Activated CD4-positive, alpha-beta memory T cell treated with anti-CD3 and anti-CD28 coated beads, Interleukin-2, amount 10 ng/mL, durations not matched to agents 7 days and 5 days (primary cell): ENCODE measurements at regions of chr1 and their contacts with region 1.

Region 1: GRCh38 chr1:36223993-36224536 is at the start of gene THRAP3:
- DNase-seq: peak; percentile 100
- H3K4me3 Mint-ChIP-seq: peak within 1 kb of the TSS; percentile 94
- H3K27ac Mint-ChIP-seq: peak within 1 kb of the TSS; percentile 99
- H3K4me1 Mint-ChIP-seq: peaks cover 32% of the 10 kb centered on the region
- H3K27me3 Mint-ChIP-seq: no peaks in the 10 kb centered on the region
- total RNA-seq, gene THRAP3: 128 to 133 TPM

Region 2: GRCh38 chr1:36160949-36161485 is 63.0 kb before region 1 on chr1:
- CTCF ChIA-PET with region 1: interaction called, 10 read pairs
- POLR2A ChIA-PET with region 1: interaction called, 72 read pairs
- DNase-seq: peak; percentile 84
- H3K4me3 Mint-ChIP-seq: peak overlapping the region; percentile 74
- H3K27ac Mint-ChIP-seq: peak overlapping the region; percentile 88
- H3K4me1 Mint-ChIP-seq: peaks cover 67% of the 10 kb centered on the region
- H3K27me3 Mint-ChIP-seq: no peaks in the 10 kb centered on the region

Region 3: DNA sequence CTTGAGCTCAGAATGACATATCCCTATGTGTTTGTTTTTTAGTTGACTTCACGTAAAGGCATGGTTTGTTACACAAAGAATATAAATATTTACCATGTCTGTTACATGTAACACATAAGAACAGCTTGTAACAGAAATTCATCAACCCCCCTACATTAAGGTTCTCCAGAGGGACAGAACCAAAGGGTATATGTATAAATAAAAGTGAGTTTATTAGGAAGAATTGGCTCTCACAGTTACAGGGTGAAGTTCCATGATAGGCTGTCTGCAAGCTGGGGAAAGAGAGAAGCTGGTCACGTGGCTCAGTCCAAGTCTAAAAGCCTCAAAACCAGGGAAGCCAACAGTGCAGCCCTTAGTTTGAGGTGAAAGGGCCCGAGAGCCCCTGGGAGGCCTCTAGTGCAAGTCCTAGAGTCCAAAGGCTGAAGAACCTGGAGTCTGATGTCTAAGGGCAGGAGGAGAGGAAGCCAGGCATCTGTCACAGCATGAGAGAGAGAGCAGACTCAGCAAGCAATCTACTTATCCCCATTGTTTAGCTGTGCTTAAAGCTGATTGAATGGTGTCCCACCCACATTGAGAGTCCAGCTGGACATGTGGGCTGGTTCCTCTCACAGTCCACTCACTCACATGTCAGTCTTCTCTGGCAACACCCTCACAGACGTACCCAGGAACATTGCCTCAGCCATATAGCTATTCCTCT is 16.0 kb after region 1 on chr1:
- CTCF ChIA-PET with region 1: interaction called, 4 read pairs
- POLR2A ChIA-PET with region 1: interaction called, 26 read pairs
- DNase-seq: no peak
- H3K4me3 Mint-ChIP-seq: no peak overlapping the region
- H3K27ac Mint-ChIP-seq: no peak overlapping the region
- H3K4me1 Mint-ChIP-seq: peaks cover 20% of the 10 kb centered on the region
- H3K27me3 Mint-ChIP-seq: no peaks in the 10 kb centered on the region

Region 4: GRCh38 chr1:36285448-36286101 is 61.5 kb after region 1 on chr1:
- CTCF ChIA-PET with region 1: interaction called, 9 read pairs
- POLR2A ChIA-PET with region 1: interaction called, 11 read pairs
- DNase-seq: peak; percentile 65
- H3K4me3 Mint-ChIP-seq: no peak overlapping the region
- H3K27ac Mint-ChIP-seq: peak overlapping the region; percentile 61
- H3K4me1 Mint-ChIP-seq: peaks cover 21% of the 10 kb centered on the region
- H3K27me3 Mint-ChIP-seq: no peaks in the 10 kb centered on the region

Region 5: DNA sequence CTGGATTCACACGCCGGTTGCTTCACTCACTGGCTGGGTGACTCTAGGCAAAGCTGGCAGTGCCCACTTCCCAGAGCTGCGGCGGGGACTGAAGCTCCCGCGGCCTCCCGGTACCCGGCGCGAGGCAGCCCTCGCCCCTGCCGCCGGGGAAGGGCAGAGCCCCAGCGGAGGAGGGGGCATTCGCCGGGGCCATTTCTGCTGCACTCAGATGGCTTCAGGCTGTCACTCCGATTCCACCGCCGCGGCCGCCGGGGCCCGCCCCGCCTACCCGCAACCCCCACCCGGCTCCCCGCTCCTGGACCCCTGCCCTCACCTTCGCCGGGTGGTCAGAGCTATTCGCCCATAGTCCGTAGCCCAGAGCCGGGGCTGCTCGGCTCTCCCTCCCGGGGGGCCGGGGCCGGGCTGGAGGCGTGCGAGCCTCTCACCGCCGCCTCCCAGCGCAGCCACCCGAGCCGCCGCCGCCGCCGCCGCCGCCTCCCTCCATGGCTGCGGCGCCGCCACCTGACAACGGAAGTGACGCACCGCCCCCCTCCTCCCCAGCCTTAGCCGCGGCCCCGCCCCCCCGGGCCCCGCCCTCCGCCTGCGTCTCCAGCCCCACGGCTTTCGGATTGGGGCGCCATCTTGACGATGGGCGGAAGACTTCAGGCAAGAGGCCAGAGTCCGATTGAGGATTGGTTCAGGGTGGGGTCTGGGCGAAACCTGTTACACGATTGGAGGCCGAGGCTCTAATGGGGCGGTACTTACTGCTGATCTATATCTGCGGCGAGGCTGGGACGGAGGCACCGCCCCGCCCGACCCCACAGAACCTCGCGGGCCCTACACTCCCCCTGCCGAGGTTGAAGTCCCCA is 161.6 kb after region 1 on chr1 and contains the start of gene STK40:
- CTCF ChIA-PET with region 1: interaction called, 3 read pairs
- POLR2A ChIA-PET with region 1: interaction called, 33 read pairs
- DNase-seq: peak; percentile 99
- H3K4me3 Mint-ChIP-seq: peak within 1 kb of the TSS; percentile 87
- H3K27ac Mint-ChIP-seq: peak within 1 kb of the TSS; percentile 100
- H3K4me1 Mint-ChIP-seq: peaks cover 61% of the 10 kb centered on the region
- H3K27me3 Mint-ChIP-seq: no peaks in the 10 kb centered on the region
- total RNA-seq, gene STK40: 75.2 to 76.8 TPM